Posterior cingulate gyrus (tissue), 11 donors: ENCODE measurements at regions of chr12 and their contacts with region 1.

Region 1: DNA sequence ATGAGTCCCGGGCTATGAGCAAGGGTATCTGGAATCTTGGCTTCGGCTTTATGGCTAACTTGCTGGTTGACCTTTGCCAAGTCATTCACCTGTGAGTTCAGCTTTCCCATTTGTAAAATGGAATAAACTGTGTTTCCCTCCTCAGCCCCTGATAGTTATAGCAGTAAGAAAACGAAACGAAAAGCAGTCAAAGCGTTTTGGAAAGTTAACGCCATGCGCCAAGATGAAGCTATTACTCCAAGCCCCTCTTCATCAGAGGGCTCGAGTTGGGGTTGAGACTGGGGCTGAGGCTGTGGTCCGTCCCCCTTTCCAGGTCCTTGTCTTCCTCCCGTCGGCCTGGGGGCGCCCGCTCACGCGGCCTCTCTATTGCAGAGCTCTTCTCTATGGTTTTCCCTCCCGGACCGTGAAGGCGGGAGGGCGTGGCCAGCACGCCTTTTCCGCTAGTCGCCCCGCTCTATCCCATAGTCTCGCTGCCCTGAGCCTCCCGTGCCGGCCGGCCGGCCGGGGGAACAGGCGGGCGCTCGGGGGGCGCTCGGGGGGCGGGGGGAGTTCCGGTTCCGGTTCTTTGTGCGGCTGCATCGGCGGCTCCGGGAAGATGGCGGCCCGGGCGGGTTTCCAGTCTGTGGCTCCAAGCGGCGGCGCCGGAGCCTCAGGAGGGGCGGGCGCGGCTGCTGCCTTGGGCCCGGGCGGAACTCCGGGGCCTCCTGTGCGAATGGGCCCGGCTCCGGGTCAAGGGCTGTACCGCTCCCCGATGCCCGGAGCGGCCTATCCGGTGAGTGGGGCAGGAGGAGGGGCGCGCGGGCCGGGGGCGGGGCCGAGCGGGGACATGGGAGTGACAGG is at the start of gene SMARCD1:
- DNase-seq: peak; percentile 85 to 99 (median 94)

Region 2: GRCh38 chr12:50111693-50112455 is 26.9 kb after region 1 on chr12 and contains the start of gene COX14:
- intact Hi-C with region 1: loop called (anchors 2 kb)
- DNase-seq: peak; percentile 97 to 100 (median 99)

Region 3: GRCh38 chr12:50167041-50167828 is 82.2 kb after region 1 on chr12 and contains the start of gene CERS5:
- intact Hi-C with region 1: loop called (anchors 1 kb)
- DNase-seq: peak; percentile 91 to 100 (median 96)